ENCODE measurements at regions of chr6 and their contacts with region 1.

Region 1: GRCh38 chr6:4018172-4018905 is 60.6 kb downstream of the FAM217A start:
- DNase-seq: peak; percentile 92 to 96 (median 95)
- H3K4me3 ChIP-seq: peak overlapping the region; percentile 74
- H3K4me3 Mint-ChIP-seq: peak overlapping the region; percentile 90 to 98 (median 96)
- H3K27ac ChIP-seq: peak overlapping the region; percentile 93
- H3K27ac Mint-ChIP-seq: peak overlapping the region; percentile 95 to 100 (median 98)
- H3K4me1 ChIP-seq: peaks cover 57% of the 10 kb centered on the region
- H3K4me1 Mint-ChIP-seq: peaks cover 63 to 87% (median 82%) of the 10 kb centered on the region in 3 donors
- H3K27me3 ChIP-seq: no peaks in the 10 kb centered on the region
- H3K27me3 Mint-ChIP-seq: no peaks in the 10 kb centered on the region

Region 2: DNA sequence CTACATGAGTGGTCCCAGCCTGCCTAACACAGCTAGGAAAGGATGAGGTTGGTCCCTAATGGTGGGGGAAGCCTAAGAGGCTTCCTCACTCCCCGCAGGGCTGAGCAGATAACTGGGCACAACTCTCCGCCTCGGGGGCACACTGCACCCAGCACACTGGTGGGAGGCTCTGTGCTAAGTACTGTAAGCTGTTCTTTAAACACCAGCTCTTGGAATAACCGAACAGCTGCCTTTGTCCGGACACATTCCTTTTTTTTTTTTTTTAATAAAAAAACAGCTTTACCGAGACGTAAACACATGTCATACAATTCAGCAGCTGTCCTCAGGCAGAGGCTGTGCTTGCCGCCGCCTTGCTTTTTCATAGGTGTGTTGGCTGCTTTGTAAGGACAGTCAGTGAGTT is 752.7 kb before region 1 on chr6:
- CTCF ChIA-PET with region 1: no interaction called
- POLR2A ChIA-PET with region 1: no interaction called
- DNase-seq: no peak
- H3K4me3 ChIP-seq: no peak overlapping the region
- H3K4me3 Mint-ChIP-seq: no peak overlapping the region
- H3K27ac ChIP-seq: no peak overlapping the region
- H3K27ac Mint-ChIP-seq: no peak overlapping the region
- H3K4me1 ChIP-seq: peaks cover 18% of the 10 kb centered on the region
- H3K4me1 Mint-ChIP-seq: peaks cover 48 to 80% (median 69%) of the 10 kb centered on the region in 3 donors
- H3K27me3 ChIP-seq: no peaks in the 10 kb centered on the region
- H3K27me3 Mint-ChIP-seq: no peaks in the 10 kb centered on the region

Region 3: DNA sequence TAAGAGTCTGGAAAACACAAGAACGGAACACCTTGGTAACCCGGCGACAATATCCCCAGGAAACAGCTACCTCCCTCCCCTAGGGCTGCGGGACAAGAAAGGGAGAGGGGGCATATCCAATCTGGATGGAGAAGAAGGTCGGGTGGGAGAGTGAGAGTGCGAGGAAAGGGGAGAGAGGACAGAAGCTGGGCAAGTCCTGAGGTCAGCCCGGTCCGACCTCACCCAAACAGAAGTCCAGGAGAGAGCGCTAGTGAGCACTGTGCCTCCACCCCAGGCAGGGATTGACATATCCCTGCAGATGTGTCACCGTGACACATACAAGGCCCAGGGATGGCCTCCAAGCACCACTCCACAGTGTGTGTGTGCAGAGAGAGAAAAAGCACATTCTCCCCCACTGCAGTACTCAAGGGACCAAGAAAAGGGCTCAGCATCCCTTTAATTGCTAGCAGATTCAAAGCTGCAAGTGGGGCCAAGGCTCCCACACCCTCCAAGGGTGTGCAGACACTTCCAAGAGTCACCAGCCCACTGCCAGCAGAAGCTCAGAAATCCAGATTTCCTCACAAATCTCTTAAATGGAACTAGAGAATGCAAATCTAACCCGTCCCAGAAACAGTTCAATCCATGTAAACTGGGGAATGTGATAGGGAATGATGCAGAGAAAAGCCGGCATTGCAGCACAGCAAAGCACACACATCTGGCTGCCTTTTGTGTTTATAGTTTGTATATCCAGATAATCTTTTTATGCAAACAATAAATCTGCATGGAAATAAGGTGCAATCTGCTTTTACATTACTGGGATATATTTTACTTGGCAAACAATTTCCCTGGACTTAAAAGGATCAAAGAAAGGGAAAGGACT is 269.9 kb before region 1 on chr6:
- CTCF ChIA-PET with region 1: interaction called, 13 read pairs
- POLR2A ChIA-PET with region 1: no interaction called
- DNase-seq: no peak
- H3K4me3 ChIP-seq: no peak overlapping the region
- H3K4me3 Mint-ChIP-seq: peak overlapping the region in 2 of 7 donors; percentile 5 to 32
- H3K27ac ChIP-seq: no peak overlapping the region
- H3K27ac Mint-ChIP-seq: no peak overlapping the region
- H3K4me1 ChIP-seq: peaks cover 5% of the 10 kb centered on the region
- H3K4me1 Mint-ChIP-seq: peaks cover 0 to 14% (median 5%) of the 10 kb centered on the region in 3 donors
- H3K27me3 ChIP-seq: peaks cover 23% of the 10 kb centered on the region
- H3K27me3 Mint-ChIP-seq: peaks cover 20 to 39% of the 10 kb centered on the region in 2 donors

Region 4: DNA sequence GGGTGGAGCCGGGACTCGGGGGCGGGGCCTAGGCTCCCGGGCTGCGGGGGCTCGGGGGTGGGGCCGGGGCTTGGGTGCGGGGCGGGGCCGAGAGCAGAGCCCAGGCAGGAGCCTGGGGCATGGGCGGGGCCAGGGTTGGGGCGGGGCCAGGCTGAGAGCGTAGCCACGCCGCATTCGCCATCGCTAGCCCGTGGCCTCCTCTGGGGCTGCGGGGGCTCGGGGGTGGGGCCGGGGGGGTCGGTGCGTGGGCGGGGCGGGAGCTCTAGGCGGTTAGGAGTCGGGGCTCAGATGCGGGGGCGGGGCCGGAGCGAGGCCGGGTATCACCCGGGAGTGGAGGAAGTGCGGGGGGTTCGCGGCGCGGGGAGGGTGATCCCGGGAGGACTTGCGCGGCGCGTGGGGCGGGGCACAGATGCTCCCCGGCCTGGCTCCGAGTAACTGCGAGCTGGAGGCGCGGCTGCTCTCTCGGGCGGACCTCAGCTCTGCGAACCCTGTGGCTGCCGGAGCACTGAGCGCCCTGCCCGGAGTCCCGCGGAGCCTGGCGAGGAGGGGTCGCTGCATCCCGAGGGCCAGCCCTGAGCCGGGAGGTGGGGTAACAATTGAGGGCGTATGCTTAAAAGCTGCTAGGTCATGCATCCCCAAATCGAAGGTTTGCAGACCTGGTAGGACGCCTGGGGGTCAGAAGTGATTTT is 117.5 kb after region 1 on chr6:
- CTCF ChIA-PET with region 1: interaction called, 10 read pairs
- POLR2A ChIA-PET with region 1: interaction called, 37 read pairs
- DNase-seq: peak; percentile 87 to 97 (median 93)
- H3K4me3 ChIP-seq: peak overlapping the region; percentile 71
- H3K4me3 Mint-ChIP-seq: peak overlapping the region; percentile 82 to 93 (median 87)
- H3K27ac ChIP-seq: peak overlapping the region; percentile 60
- H3K27ac Mint-ChIP-seq: peak overlapping the region; percentile 67 to 91 (median 84)
- H3K4me1 ChIP-seq: peaks cover 26% of the 10 kb centered on the region
- H3K4me1 Mint-ChIP-seq: peaks cover 43 to 69% (median 56%) of the 10 kb centered on the region in 3 donors
- H3K27me3 ChIP-seq: no peaks in the 10 kb centered on the region
- H3K27me3 Mint-ChIP-seq: no peaks in the 10 kb centered on the region

Measured in CD8-positive, alpha-beta memory T cell (primary cell).